ENCODE measurements at regions of chr21 and their contacts with region 1.

Region 1: GRCh38 chr21:29477941-29478340 is 179.2 kb downstream of the BACH1 start:
- DNase-seq: no peak
- H3K4me3 Mint-ChIP-seq: no peak overlapping the region
- H3K27ac Mint-ChIP-seq: no peak overlapping the region
- H3K4me1 Mint-ChIP-seq: peaks cover 10% of the 10 kb centered on the region
- H3K27me3 Mint-ChIP-seq: peaks cover 2% of the 10 kb centered on the region

Region 2: GRCh38 chr21:29849735-29850176 is 371.8 kb after region 1 on chr21:
- CTCF ChIA-PET with region 1: interaction called, 40 read pairs
- POLR2A ChIA-PET with region 1: no interaction called
- DNase-seq: peak; percentile 49
- H3K4me3 Mint-ChIP-seq: no peak overlapping the region
- H3K27ac Mint-ChIP-seq: no peak overlapping the region
- H3K4me1 Mint-ChIP-seq: no peaks in the 10 kb centered on the region
- H3K27me3 Mint-ChIP-seq: peaks cover 3% of the 10 kb centered on the region